ENCODE measurements at regions of chr15 and their contacts with region 1.

Region 1: GRCh38 chr15:68218847-68219798 is 10.4 kb downstream of the CLN6 start:
- DNase-seq: no peak

Region 2: DNA sequence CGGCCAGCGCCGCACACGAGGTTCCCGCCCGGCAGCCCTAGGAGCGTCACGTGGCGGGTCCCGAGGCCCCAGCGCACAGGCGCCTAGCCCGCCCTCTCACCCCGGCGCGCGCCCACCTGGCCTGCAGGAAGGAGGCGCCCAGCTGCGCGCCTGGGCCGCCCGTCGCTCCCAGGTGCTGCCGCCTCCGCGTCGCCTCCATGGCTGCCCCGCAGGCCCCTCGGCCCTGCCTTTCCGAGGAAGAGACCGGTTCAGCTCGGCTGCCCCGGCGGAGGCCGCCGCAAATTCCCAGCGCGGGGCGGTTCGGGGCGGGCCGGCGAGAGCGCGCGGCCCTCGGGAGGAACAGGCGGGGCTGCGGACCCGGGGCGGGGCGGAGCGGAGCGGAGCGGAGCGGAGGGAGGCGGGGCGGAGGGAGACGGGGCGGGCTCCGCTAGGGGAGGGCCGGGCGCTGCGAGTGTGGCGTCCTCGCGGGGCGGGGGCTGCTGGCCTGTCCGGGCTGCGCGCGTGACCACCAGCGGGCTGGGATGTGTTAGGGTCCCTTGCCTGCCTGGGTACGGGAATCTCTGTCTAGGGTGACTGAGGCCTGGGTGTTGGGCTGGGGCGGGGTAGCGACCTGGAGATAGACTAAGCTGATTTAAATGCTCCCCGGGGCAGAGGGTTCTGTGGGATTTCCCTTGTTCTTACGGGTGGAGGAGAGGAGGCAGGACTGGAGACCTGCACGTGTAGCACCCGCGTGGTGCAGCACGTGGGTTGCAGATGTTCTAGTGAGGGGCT is 10.4 kb after region 1 on chr15 and contains the start of gene CLN6:
- CTCF ChIA-PET with region 1: no interaction called
- POLR2A ChIA-PET with region 1: interaction called, 11 read pairs
- DNase-seq: peak; percentile 96